ENCODE measurements at regions of chr6 and their contacts with region 1.

Region 1: DNA sequence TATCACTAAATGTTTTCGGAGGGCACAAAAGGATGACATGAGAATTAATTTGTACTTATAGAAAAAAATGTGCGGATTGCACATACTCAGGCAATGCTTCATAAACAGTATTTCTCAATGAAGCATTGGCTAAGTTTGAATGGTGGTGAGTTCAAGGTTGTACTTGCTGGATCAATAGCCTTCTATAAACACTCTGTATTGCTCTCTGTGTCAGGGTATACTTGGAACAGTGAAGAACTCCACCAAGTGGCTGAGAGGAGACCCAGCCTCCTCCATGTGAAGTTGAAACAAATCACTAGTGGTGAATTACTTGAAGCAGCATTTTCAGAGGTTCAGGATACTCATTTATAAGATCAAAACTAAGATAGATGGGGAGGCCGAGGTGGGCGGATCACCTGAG is 360.6 kb downstream of the RIMS1 start:
- DNase-seq: peak; percentile 22
- ATAC-seq: peak; percentile 71
- H3K4me3 ChIP-seq: no peak overlapping the region
- H3K27ac ChIP-seq: no peak overlapping the region
- H3K4me1 ChIP-seq: no peaks in the 10 kb centered on the region
- H3K27me3 ChIP-seq: no peaks in the 10 kb centered on the region
- CTCF ChIP-seq: peak; percentile 44

Region 2: GRCh38 chr6:71766146-71766760 is 480.7 kb before region 1 on chr6:
- CTCF ChIA-PET with region 1: no interaction called
- POLR2A ChIA-PET with region 1: no interaction called
- intact Hi-C with region 1: no loop called
- DNase-seq: no peak
- ATAC-seq: no peak
- H3K4me3 ChIP-seq: no peak overlapping the region
- H3K27ac ChIP-seq: no peak overlapping the region
- H3K4me1 ChIP-seq: no peaks in the 10 kb centered on the region
- H3K27me3 ChIP-seq: no peaks in the 10 kb centered on the region
- CTCF ChIP-seq: no peak

Region 3: GRCh38 chr6:72140795-72141194 is 106.1 kb before region 1 on chr6:
- CTCF ChIA-PET with region 1: no interaction called
- POLR2A ChIA-PET with region 1: no interaction called
- intact Hi-C with region 1: loop called (anchors 1 kb)
- DNase-seq: peak; percentile 33
- ATAC-seq: no peak
- H3K4me3 ChIP-seq: no peak overlapping the region
- H3K27ac ChIP-seq: no peak overlapping the region
- H3K4me1 ChIP-seq: no peaks in the 10 kb centered on the region
- H3K27me3 ChIP-seq: no peaks in the 10 kb centered on the region
- CTCF ChIP-seq: peak; percentile 44; the same call in 1 of the 2 replicates

Region 4: DNA sequence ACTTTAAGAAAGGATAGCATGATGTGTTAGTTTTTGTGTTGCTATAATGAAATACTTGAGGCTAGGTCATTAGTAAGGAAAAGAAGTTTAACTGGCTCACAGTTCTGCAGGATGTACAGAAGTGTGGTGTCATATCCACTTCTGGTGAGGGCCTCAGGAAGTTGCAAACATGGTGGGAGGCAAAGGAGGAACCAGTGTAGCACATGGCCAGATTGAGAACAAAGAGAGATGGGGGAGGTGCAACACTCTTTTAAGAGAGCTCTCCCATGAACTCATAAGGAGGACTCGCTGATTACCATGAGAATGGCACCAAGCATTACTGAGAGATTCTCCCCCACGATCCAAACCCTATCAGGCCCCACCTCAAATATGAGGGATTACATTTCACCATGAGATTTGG is 95.2 kb before region 1 on chr6:
- CTCF ChIA-PET with region 1: no interaction called
- POLR2A ChIA-PET with region 1: no interaction called
- intact Hi-C with region 1: loop called (anchors 5 kb)
- DNase-seq: no peak
- ATAC-seq: no peak
- H3K4me3 ChIP-seq: no peak overlapping the region
- H3K27ac ChIP-seq: no peak overlapping the region
- H3K4me1 ChIP-seq: no peaks in the 10 kb centered on the region
- H3K27me3 ChIP-seq: no peaks in the 10 kb centered on the region
- CTCF ChIP-seq: no peak

Region 5: GRCh38 chr6:72316675-72317380 is 69.9 kb after region 1 on chr6:
- CTCF ChIA-PET with region 1: no interaction called
- POLR2A ChIA-PET with region 1: no interaction called
- intact Hi-C with region 1: no loop called
- DNase-seq: no peak
- ATAC-seq: no peak
- H3K4me3 ChIP-seq: no peak overlapping the region
- H3K27ac ChIP-seq: no peak overlapping the region
- H3K4me1 ChIP-seq: no peaks in the 10 kb centered on the region
- H3K27me3 ChIP-seq: no peaks in the 10 kb centered on the region
- CTCF ChIP-seq: no peak

Region 6: GRCh38 chr6:72411872-72412708 is 165.2 kb after region 1 on chr6:
- CTCF ChIA-PET with region 1: no interaction called
- POLR2A ChIA-PET with region 1: no interaction called
- intact Hi-C with region 1: loop called (anchors 1 kb)
- DNase-seq: peak; percentile 80
- ATAC-seq: peak; percentile 85
- H3K4me3 ChIP-seq: no peak overlapping the region
- H3K27ac ChIP-seq: no peak overlapping the region
- H3K4me1 ChIP-seq: peaks cover 7% of the 10 kb centered on the region
- H3K27me3 ChIP-seq: no peaks in the 10 kb centered on the region
- CTCF ChIP-seq: peak; percentile 99